Activated CD4-positive, alpha-beta T cell treated with anti-CD3 and anti-CD28 coated beads, Interleukin-2, amount 10 ng/mL, durations not matched to agents 24 days and 14 days (primary cell): ENCODE measurements at regions of chr7 and their contacts with region 1.

Region 1: DNA sequence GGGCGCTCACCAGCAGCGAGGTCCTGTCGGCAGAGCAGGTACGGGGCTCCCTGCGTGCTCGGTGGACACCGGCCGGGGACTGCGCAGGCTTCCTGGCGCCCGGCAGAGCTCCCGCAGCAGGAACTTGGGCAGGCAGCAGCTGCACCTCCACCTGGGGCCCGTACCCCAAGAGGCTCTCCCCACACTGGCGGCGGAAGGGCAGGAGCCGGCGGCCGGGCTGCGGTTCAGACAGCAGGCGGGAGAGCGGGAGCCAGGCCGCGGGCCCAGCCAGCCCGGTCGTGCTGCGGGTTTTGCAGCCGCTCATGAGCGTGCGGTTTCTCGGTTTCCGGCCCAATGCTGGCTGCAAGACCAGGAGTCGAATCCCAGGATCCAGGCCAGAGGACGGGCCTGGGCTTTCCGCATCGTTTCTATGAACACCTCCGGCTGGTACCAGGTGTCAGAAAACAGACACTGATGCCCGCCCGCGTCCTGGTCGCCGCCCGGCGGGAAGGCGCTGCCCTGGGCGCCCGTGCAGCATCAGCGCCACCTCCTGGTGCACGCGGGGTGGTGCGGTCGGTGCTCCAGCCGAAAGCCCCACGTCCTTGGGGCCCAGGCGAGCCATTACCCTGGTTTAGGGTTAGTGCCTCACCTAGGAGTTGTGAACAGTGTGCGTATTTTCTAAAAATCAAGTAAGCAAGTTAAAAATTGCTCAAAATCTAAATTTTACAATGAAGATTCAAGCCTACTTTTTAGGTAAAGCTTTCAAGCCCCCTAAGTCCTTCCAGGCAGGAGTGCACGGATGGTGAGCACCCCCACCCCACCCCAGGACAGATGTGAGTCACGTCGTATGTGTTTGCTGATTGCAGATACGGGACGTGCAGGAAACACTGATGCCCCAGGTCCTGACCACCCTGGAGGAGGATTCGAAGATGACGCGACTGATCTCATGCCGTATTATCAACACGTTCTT is 47.4 kb upstream of the PRKAR1B start:
- DNase-seq: peak; percentile 89
- H3K4me3 Mint-ChIP-seq: no peak overlapping the region
- H3K27ac Mint-ChIP-seq: no peak overlapping the region
- H3K4me1 Mint-ChIP-seq: no peaks in the 10 kb centered on the region
- H3K27me3 Mint-ChIP-seq: no peaks in the 10 kb centered on the region

Region 2: DNA sequence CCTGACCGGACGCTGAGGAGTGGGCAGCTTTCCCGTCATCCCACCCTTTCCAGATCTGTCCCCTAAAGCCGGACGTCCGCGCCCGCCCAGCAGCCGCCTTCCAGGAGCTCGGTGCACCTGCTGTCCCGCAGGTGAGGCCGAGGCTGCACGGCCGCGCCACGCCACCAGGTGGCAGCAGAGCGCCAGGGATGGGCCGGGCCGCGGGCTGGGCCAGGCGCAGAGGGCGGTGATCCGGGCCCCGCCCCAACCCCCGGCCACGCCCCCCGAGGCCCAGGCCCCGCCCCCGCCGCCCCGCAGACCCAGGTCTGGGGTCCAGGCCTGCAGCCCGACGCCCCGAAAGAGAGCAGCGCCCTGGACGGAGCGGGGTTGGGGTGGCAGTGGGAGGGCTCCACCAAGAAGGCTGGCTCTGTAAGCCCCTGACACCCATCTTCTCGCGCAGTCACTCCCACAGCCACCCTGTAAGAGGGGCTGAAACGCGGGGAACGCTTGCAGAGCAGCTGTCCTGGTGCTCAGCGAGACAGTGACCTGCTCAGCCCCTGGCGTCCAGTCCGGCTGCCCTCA is 452.2 kb before region 1 on chr7:
- intact Hi-C with region 1: loop called (anchors 1 kb)
- DNase-seq: peak; percentile 97
- H3K4me3 Mint-ChIP-seq: no peak overlapping the region
- H3K27ac Mint-ChIP-seq: no peak overlapping the region
- H3K4me1 Mint-ChIP-seq: no peaks in the 10 kb centered on the region
- H3K27me3 Mint-ChIP-seq: peaks cover 4% of the 10 kb centered on the region

Region 3: DNA sequence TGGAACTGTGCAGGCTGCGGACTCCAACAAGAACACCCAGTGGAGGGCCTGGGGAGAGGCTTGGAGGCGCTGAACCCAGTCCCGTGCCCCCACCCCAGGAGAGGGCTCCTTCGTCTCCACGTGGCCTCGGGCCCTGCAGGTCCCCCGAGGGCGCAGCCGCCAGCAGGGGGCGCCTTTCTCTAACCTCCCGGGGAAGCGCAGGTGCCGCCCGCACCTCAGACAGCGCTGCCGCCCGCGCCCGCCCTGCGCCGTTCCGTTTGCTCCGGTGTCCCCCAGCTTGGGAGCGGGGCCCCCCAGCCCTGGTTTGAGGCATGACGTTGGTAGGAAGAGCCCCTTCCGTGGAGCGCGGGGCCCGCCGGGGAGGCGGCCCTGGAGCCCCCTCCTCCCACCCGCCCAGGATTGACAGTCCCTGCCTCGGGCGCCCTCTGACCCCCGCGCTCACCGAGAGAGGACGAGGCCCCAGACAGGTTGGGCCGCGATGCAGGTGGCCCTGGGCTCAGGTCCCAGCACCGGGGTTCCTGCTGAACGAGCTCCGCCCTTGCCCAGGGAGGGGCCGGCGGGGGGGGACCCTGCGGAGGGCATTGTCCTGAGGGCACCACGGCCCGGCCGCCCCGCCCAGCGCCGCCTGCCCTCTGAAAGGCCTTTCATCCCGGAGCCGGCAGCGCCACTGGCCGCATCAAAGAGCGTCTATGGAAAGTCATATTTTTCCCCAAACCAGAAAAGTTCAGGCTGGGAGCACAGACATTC is 441.6 kb before region 1 on chr7:
- intact Hi-C with region 1: loop called (anchors 1 kb)
- DNase-seq: peak; percentile 95
- H3K4me3 Mint-ChIP-seq: no peak overlapping the region
- H3K27ac Mint-ChIP-seq: no peak overlapping the region
- H3K4me1 Mint-ChIP-seq: peaks cover 4% of the 10 kb centered on the region
- H3K27me3 Mint-ChIP-seq: peaks cover 3% of the 10 kb centered on the region

Region 4: GRCh38 chr7:552868-553635 is 221.4 kb before region 1 on chr7:
- intact Hi-C with region 1: no loop called
- DNase-seq: no peak
- H3K4me3 Mint-ChIP-seq: no peak overlapping the region
- H3K27ac Mint-ChIP-seq: no peak overlapping the region
- H3K4me1 Mint-ChIP-seq: no peaks in the 10 kb centered on the region
- H3K27me3 Mint-ChIP-seq: no peaks in the 10 kb centered on the region